CD4-positive, alpha-beta T cell (primary cell): ENCODE measurements at regions of chr5 and their contacts with region 1.

Region 1: GRCh38 chr5:77630258-77631089 is 8.0 kb downstream of the OTP start:
- DNase-seq: peak in 7 of 14 experiments; percentile 16 to 56 (median 35)
- ATAC-seq: peak; percentile 80
- H3K4me3 ChIP-seq: peak overlapping the region; percentile 45
- H3K4me3 Mint-ChIP-seq: peak overlapping the region; percentile 90
- H3K27ac ChIP-seq: no peak overlapping the region
- H3K27ac Mint-ChIP-seq: no peak overlapping the region
- H3K4me1 ChIP-seq: peaks cover 38% of the 10 kb centered on the region
- H3K4me1 Mint-ChIP-seq: peaks cover 25% of the 10 kb centered on the region
- H3K27me3 ChIP-seq: peaks cover 64 to 89% of the 10 kb centered on the region in 2 experiments
- H3K27me3 Mint-ChIP-seq: peaks cover 90% of the 10 kb centered on the region
- CTCF ChIP-seq: no peak

Region 2: GRCh38 chr5:77645158-77645994 is 14.9 kb after region 1 on chr5:
- CTCF ChIA-PET with region 1: interaction called, 4 read pairs
- POLR2A ChIA-PET with region 1: interaction called, 3 read pairs
- intact Hi-C with region 1: loop called in 1 of 2 experiments (anchors 2 kb)
- DNase-seq: peak in 5 of 14 experiments; percentile 24 to 71 (median 44)
- ATAC-seq: peak; percentile 68
- H3K4me3 ChIP-seq: peak overlapping the region; percentile 34
- H3K4me3 Mint-ChIP-seq: peak overlapping the region; percentile 71
- H3K27ac ChIP-seq: no peak overlapping the region
- H3K27ac Mint-ChIP-seq: no peak overlapping the region
- H3K4me1 ChIP-seq: peaks cover 21% of the 10 kb centered on the region
- H3K4me1 Mint-ChIP-seq: peaks cover 25% of the 10 kb centered on the region
- H3K27me3 ChIP-seq: peaks cover 66 to 78% of the 10 kb centered on the region in 2 experiments
- H3K27me3 Mint-ChIP-seq: peaks cover 97% of the 10 kb centered on the region
- CTCF ChIP-seq: no peak